Activated B cell treated with CpG ODN at 0.5 μM for 24 hours (primary cell): ENCODE measurements at regions of chr15 and their contacts with region 1.

Region 1: GRCh38 chr15:78422571-78423340 is 15.3 kb upstream of the IREB2 start:
- DNase-seq: peak; percentile 35
- ATAC-seq: peak; percentile 91
- H3K4me3 Mint-ChIP-seq: no peak overlapping the region
- H3K27ac Mint-ChIP-seq: no peak overlapping the region
- H3K4me1 Mint-ChIP-seq: no peaks in the 10 kb centered on the region
- H3K27me3 Mint-ChIP-seq: peaks cover 19% of the 10 kb centered on the region
- CTCF ChIP-seq: peak; percentile 86

Region 2: DNA sequence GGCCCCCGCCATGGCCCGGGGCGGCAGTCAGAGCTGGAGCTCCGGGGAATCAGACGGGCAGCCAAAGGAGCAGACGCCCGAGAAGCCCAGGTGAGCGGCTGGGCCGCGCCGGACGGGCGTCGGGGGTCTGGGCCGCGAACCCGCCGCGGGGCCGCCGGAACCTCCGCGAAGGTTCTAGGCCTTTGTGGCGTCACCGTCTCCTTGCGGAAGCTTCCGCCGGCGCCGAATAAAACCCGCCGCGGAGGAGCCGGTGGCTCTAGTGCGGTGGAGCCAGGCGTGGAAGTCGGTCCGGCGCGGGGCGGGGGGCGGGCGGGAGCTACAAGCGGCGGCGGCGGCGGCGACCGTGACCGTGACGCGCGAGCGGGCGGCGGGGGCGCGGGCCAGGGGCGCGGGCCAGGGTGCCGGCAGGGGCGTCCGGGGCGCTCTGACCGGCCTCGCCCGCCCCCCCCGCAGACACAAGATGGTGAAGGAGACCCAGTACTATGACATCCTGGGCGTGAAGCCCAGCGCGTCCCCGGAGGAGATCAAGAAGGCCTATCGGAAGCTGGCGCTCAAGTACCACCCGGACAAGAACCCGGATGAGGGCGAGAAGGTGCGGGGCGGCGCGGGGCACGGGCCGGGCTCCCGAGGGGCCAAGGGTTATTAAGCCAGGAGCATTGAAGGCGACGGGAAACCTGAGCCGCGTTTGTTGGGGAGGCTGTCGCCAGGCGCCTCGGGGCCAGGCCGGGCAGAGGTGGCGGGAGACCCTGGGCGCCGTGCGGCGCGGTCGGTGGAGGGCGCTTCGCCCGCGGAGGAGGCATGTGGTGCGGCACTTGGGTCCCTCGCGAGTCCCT is 158.2 kb before region 1 on chr15 and contains the start of gene DNAJA4:
- CTCF ChIA-PET with region 1: no interaction called
- POLR2A ChIA-PET with region 1: no interaction called
- intact Hi-C with region 1: loop called (anchors 10 kb)
- DNase-seq: peak; percentile 46
- ATAC-seq: peak; percentile 72
- H3K4me3 Mint-ChIP-seq: peak within 1 kb of the TSS; percentile 84
- H3K27ac Mint-ChIP-seq: peak within 1 kb of the TSS; percentile 70
- H3K4me1 Mint-ChIP-seq: peaks cover 13% of the 10 kb centered on the region
- H3K27me3 Mint-ChIP-seq: no peaks in the 10 kb centered on the region
- CTCF ChIP-seq: no peak
- total RNA-seq, gene DNAJA4: 18.8 and 22.3 TPM in 2 replicates

Region 3: DNA sequence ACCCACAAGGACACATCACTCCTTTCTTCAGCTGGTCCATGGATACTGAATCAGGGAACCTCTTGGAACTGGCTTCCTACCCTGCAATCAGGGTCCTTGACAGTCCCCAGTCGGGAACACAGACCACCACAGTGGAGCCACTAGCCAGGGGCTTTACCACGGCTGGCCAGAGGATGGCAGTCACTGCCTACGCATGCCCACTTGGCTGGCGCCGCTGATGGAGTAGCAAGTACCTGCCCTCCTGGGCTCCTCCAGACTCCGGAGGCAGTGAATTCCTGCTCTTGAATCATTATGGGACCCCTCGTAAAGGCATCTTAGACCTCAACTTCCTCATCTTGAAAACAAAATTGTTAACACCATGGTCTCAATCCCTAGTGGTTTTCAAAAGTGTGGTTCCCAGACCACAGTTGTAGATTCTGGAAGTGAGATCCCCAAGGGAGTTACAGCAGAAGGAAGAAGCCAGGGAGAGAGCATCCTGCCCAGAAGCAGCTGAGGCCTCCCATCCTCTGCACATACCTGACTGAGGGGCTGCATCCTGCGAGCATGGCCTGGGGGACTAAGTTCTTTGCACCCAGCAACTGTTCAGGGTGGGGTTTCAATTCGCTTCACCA is 114.2 kb before region 1 on chr15:
- CTCF ChIA-PET with region 1: interaction called, 3 read pairs
- POLR2A ChIA-PET with region 1: no interaction called
- intact Hi-C with region 1: loop called (anchors 1 kb)
- DNase-seq: no peak
- ATAC-seq: peak; percentile 61
- H3K4me3 Mint-ChIP-seq: no peak overlapping the region
- H3K27ac Mint-ChIP-seq: no peak overlapping the region
- H3K4me1 Mint-ChIP-seq: no peaks in the 10 kb centered on the region
- H3K27me3 Mint-ChIP-seq: peaks cover 13% of the 10 kb centered on the region
- CTCF ChIP-seq: no peak

Region 4: DNA sequence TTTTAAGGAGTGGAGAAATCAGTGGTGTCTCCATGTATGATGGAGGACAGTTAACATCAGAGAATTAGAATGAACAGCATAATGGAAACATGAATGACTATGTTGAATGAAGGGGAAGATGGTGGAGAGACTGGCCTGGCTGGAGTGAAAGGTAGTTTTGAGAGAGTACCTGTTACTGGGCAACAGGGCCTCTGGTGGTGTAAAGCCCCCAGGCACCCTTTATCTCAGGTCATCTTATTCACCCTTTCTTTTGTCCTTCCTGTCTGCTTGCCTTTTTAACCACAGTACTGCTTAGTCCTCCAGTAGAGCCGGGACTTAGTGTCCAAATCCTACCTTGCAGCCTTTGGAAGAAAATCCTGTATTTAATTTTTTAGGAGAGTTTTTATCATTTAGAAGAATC is 21.5 kb after region 1 on chr15:
- CTCF ChIA-PET with region 1: no interaction called
- POLR2A ChIA-PET with region 1: no interaction called
- intact Hi-C with region 1: no loop called
- DNase-seq: no peak
- ATAC-seq: no peak
- H3K4me3 Mint-ChIP-seq: no peak overlapping the region
- H3K27ac Mint-ChIP-seq: no peak overlapping the region
- H3K4me1 Mint-ChIP-seq: peaks cover 41% of the 10 kb centered on the region
- H3K27me3 Mint-ChIP-seq: no peaks in the 10 kb centered on the region
- CTCF ChIP-seq: no peak

Region 5: GRCh38 chr15:79154483-79155135 is 731.9 kb after region 1 on chr15:
- CTCF ChIA-PET with region 1: no interaction called
- POLR2A ChIA-PET with region 1: no interaction called
- intact Hi-C with region 1: no loop called
- DNase-seq: no peak
- ATAC-seq: no peak
- H3K4me3 Mint-ChIP-seq: no peak overlapping the region
- H3K27ac Mint-ChIP-seq: no peak overlapping the region
- H3K4me1 Mint-ChIP-seq: no peaks in the 10 kb centered on the region
- H3K27me3 Mint-ChIP-seq: peaks cover 3% of the 10 kb centered on the region
- CTCF ChIP-seq: no peak